Left colon (tissue), 2 donors: ENCODE measurements at regions of chr15 and their contacts with region 1.

Region 1: GRCh38 chr15:44968475-44968874 is 12.0 kb downstream of the TERB2 start:
- DNase-seq: no peak
- ATAC-seq: no peak

Region 2: GRCh38 chr15:45037936-45038335 is 69.5 kb after region 1 on chr15:
- intact Hi-C with region 1: loop called in 1 of 2 experiments (anchors 5 kb)
- DNase-seq: no peak
- ATAC-seq: no peak